ENCODE measurements at regions of chr19 and their contacts with region 1.

Region 1: DNA sequence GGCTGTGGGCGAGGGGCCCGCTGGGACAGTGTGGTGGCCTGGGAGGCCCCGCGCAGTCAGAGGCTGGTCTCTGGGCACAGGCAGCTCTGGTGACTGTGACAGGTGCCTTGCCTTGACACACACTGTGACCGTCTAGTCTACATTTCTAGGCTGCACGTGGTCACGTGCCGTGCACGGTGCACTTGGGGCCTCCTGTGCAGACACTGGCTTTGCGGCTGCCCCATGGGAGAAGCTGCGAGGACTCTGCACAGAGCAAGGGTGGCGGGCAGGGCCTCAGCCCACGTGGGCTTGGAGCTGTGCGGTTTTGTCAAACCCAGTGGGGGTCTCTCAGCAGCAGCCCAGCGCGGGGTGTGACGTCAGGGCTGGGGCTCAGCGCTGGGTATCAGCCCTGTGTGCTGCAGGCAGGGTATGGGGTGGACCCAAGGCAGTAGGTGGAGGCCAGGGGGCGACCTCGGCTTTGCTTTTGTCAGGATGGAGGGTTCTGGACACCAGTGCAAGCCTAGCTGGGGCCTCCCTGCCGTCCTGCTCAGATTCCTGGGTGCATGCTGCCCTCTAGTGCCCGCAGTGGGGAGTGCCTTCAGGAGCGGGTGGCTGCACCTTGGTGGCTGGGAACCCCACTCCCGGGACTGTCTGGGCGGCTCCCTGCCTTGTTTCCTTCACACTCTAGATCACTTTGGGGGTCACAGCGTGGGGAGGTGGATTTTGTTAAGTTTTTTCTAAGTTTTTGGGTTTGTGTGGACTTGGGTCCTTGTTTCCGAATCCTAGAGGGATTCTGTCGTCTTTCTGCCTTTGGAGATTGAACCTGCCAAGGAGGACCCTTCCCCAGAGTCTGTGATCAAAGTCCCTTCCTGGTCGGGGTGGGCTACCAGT is 62.6 kb downstream of the KDM4B start:
- DNase-seq: peak; percentile 93
- CTCF ChIP-seq: peak; percentile 97

Region 2: DNA sequence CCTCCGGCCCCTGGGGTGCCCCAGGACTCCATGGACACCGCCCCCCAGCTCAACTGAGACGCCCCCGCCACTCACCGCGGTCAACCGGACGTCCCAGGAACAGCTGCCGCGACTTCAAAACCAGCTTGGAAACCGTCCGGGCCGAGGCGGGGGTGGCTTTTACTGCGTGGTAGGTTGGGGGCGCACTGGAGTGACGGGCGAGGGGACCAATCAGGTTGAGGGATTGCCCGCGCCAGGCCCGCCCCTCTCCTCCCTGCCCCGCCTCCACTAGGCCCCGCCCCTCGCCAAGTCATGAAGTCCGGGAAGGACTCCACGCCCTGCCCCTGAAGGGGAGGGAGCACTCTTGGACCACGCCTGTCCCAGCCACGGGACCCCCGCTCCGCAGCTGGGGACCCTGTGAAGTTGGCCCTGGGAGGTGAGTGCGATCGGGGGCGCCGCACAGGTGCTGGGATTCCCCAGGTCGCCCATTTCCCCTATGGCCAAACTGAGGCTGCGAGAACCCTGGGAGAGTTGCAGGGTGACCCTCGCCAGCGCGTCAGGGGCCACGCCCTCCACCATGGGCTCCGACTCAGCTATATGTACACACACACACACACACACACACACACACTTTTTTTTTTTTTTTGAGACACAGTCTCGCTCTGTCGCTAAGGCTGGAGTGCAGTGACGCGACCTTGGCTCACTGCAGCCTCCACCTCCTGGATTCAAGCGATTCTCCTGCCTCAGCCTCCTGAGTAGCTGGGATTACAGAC is 163.8 kb before region 1 on chr19 and contains the start of gene PLIN3:
- CTCF ChIA-PET with region 1: interaction called, 66 read pairs
- POLR2A ChIA-PET with region 1: interaction called, 3 read pairs
- DNase-seq: peak; percentile 100
- CTCF ChIP-seq: no peak

Region 3: GRCh38 chr19:5001615-5002014 is 29.9 kb before region 1 on chr19:
- CTCF ChIA-PET with region 1: interaction called, 19 read pairs
- POLR2A ChIA-PET with region 1: no interaction called
- DNase-seq: peak; percentile 58
- CTCF ChIP-seq: peak; percentile 60

Region 4: GRCh38 chr19:5013761-5014160 is 17.7 kb before region 1 on chr19:
- CTCF ChIA-PET with region 1: interaction called, 16 read pairs
- POLR2A ChIA-PET with region 1: no interaction called
- DNase-seq: no peak
- CTCF ChIP-seq: no peak

Region 5: DNA sequence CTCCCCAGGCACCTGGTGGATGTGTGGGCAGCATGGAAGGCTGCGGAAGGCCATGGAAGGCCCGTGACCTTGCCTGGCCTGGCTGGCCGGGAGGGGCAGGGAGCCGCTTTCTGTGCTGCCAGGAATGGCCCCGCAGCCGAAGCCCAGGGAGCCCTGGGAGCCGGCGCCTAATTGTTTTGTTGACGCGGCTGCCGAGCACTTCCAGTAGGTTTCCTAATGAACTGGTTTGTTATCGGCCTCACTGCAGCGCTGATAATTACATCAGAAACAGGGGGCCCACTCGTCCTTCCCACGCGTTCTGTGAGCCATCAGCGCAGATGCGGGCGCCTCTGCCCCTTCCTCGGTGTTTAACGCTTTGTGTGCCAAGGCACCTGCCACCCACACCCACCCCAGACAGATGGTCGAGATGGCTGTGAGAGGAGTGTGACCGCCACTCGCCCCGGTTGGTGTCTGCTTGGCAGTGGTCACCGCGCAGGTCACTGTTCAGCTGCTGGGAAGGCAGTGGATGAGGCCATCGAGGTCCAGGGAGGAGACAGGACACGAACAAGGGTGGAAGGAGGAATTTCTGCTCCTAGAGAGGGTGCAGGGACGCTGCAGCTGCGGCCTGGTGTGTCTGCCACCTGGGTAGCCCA is 61.9 kb after region 1 on chr19:
- CTCF ChIA-PET with region 1: no interaction called
- POLR2A ChIA-PET with region 1: no interaction called
- DNase-seq: no peak
- CTCF ChIP-seq: no peak